ENCODE measurements at regions of chr3 and their contacts with region 1.

Region 1: DNA sequence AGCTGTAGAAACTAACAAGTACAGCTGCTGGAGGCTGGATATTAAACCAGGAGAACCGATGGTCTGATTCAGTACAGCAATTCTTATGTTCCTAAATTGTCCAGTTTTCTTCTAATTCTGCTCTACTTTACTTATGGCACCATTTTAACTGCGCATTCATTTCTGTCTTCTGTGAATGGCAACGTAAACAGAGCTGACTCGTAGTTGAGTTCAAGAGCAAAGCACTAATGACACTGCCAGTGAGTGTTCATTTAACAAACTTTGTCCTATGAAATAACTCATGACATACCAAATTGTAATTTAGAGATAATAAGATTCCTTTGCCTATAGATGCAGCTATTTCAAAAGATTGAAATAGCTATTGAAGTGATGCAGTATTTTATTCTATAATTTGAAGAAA is 48.7 kb downstream of the BCHE start:
- DNase-seq: no peak
- H3K4me3 ChIP-seq: no peak overlapping the region
- H3K27ac ChIP-seq: no peak overlapping the region
- H3K4me1 ChIP-seq: no peaks in the 10 kb centered on the region
- H3K27me3 ChIP-seq: no peaks in the 10 kb centered on the region
- CTCF ChIP-seq: no peak
- POLR2A ChIP-seq: no peak

Region 2: DNA sequence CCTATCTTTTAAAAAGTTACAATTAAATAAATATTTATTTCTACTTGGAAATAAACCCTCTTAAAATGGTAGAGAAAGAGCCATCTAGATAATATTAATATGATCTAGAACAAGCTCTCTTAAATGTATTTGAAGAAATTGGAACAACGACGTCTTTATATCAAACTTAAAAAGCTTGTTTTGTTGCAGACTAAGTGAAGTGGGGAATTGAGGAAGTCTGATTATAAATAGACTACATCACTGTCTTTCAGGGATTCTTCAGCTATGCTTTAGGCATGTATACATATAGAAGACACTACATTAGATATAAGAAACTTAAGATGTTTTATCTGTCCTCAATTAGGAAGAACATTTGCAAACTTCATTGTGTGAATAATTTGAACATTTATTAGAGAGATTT is 46.9 kb after region 1 on chr3:
- intact Hi-C with region 1: no loop called
- DNase-seq: no peak
- H3K4me3 ChIP-seq: no peak overlapping the region
- H3K27ac ChIP-seq: no peak overlapping the region
- H3K4me1 ChIP-seq: no peaks in the 10 kb centered on the region
- H3K27me3 ChIP-seq: no peaks in the 10 kb centered on the region
- CTCF ChIP-seq: no peak
- POLR2A ChIP-seq: no peak

Region 3: GRCh38 chr3:166265153-166265552 is 476.6 kb after region 1 on chr3:
- intact Hi-C with region 1: loop called (anchors 5 kb)
- DNase-seq: no peak
- H3K4me3 ChIP-seq: no peak overlapping the region
- H3K27ac ChIP-seq: no peak overlapping the region
- H3K4me1 ChIP-seq: no peaks in the 10 kb centered on the region
- H3K27me3 ChIP-seq: no peaks in the 10 kb centered on the region
- CTCF ChIP-seq: no peak
- POLR2A ChIP-seq: no peak

Measured in breast epithelium (tissue), 4 donors.